A549 (cell line): ENCODE measurements at regions of chr10 and their contacts with region 1.

Region 1: DNA sequence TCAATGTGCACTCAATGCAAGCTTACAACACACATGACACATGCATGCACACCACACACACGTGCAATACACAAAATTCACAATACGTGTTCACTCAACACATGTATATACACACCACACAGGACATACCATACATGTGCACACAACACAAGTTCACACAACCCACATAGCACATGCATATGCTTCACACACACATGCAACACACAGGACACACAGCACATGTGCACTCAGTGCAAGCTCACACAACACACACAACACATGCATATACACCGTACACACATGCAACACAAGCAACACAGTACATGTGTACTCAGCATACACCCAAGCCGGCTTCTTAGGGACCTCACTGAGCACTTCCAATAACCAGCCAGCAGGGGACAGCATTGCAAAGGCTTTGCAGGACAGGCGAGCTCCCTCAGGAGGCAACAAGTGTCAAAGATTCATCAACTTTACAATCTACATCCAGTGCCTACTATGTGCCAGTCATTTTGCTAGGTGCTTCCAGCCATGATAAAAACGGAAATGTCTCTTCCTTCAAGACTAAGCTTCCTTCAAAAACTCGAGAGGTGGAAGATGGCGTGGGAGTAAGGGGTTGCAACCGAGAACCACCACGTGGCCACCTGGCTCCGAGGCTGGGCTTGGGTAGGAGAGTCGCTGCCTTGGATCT is 61.1 kb downstream of the JCAD start:
- DNase-seq: peak; percentile 85 to 86
- ATAC-seq: peak; percentile 72 to 90; a peak in 5 of 6 replicates
- H3K4me3 ChIP-seq: no peak overlapping the region
- H3K27ac ChIP-seq: no peak overlapping the region
- H3K4me1 ChIP-seq: peaks cover 5% of the 10 kb centered on the region; the same call in 2 of the 3 replicates
- CTCF ChIP-seq: peak; percentile 98
- EP300 ChIP-seq: no peak
- POLR2A ChIP-seq: no peak
- RAD21 ChIP-seq: peak; percentile 96 to 99

Region 2: GRCh38 chr10:29951441-29951931 is 46.8 kb before region 1 on chr10:
- CTCF ChIA-PET with region 1: interaction called, 10 read pairs
- POLR2A ChIA-PET with region 1: no interaction called
- DNase-seq: no peak
- ATAC-seq: no peak
- H3K4me3 ChIP-seq: no peak overlapping the region
- H3K27ac ChIP-seq: peak overlapping the region in 1 of 2 experiments; percentile 50; a peak in 2 of 6 replicates
- H3K4me1 ChIP-seq: peaks cover 22% of the 10 kb centered on the region
- CTCF ChIP-seq: no peak
- EP300 ChIP-seq: no peak
- POLR2A ChIP-seq: no peak
- RAD21 ChIP-seq: no peak

Region 3: GRCh38 chr10:30013757-30014156 is 15.5 kb after region 1 on chr10:
- CTCF ChIA-PET with region 1: interaction called, 21 read pairs
- POLR2A ChIA-PET with region 1: no interaction called
- DNase-seq: no peak
- ATAC-seq: no peak
- H3K4me3 ChIP-seq: no peak overlapping the region
- H3K27ac ChIP-seq: no peak overlapping the region
- H3K4me1 ChIP-seq: no peaks in the 10 kb centered on the region
- CTCF ChIP-seq: no peak
- EP300 ChIP-seq: no peak
- POLR2A ChIP-seq: no peak
- RAD21 ChIP-seq: no peak

Region 4: DNA sequence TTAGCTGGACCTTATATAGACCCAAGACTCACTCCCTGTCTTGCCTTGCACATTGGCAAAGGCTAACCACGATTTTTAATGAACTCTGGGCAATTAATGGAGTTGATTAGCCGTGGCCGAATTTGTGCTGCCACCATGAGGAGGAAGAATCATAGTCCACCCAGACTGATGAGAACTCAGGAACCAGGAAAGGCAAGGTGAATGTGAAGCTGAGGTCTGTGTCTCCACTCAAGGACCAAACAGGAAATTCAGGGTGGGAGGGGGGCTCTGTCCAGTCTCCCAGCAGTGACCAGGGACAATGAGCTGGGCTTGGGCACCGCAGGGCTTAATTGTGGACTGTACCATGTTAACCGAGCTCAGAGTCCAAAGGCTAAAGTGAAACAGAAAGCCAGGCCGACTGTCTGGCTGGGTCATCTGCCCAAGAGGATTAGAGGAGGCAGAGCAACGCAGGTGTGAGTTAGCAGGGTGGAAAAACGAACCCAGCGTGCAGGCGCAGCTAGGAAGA is 188.1 kb after region 1 on chr10:
- CTCF ChIA-PET with region 1: interaction called, 13 read pairs
- POLR2A ChIA-PET with region 1: no interaction called
- DNase-seq: no peak
- ATAC-seq: peak in 1 of 2 experiments; percentile 11; a peak in 1 of 6 replicates
- H3K4me3 ChIP-seq: no peak overlapping the region
- H3K27ac ChIP-seq: peak overlapping the region; percentile 53 to 71; a peak in 5 of 6 replicates
- H3K4me1 ChIP-seq: peaks cover 31% of the 10 kb centered on the region
- CTCF ChIP-seq: peak; percentile 19; the same call in 1 of the 3 replicates
- EP300 ChIP-seq: no peak
- POLR2A ChIP-seq: no peak
- RAD21 ChIP-seq: peak in 1 of 2 experiments; percentile 30; a peak in 1 of 5 replicates

Region 5: GRCh38 chr10:30241422-30242110 is 243.3 kb after region 1 on chr10:
- CTCF ChIA-PET with region 1: interaction called, 23 read pairs
- POLR2A ChIA-PET with region 1: no interaction called
- DNase-seq: no peak
- ATAC-seq: no peak
- H3K4me3 ChIP-seq: no peak overlapping the region
- H3K27ac ChIP-seq: no peak overlapping the region
- H3K4me1 ChIP-seq: no peaks in the 10 kb centered on the region
- CTCF ChIP-seq: no peak
- EP300 ChIP-seq: no peak
- POLR2A ChIP-seq: no peak
- RAD21 ChIP-seq: no peak